ENCODE measurements at regions of chr20 and their contacts with region 1.

Region 1: GRCh38 chr20:36460648-36461599 is 80.4 kb upstream of the MYL9 start:
- DNase-seq: peak; percentile 95
- ATAC-seq: peak; percentile 78
- H3K4me3 Mint-ChIP-seq: peak overlapping the region; percentile 67
- H3K27ac Mint-ChIP-seq: peak overlapping the region; percentile 83
- H3K4me1 Mint-ChIP-seq: peaks cover 47% of the 10 kb centered on the region
- H3K27me3 Mint-ChIP-seq: no peaks in the 10 kb centered on the region

Region 2: DNA sequence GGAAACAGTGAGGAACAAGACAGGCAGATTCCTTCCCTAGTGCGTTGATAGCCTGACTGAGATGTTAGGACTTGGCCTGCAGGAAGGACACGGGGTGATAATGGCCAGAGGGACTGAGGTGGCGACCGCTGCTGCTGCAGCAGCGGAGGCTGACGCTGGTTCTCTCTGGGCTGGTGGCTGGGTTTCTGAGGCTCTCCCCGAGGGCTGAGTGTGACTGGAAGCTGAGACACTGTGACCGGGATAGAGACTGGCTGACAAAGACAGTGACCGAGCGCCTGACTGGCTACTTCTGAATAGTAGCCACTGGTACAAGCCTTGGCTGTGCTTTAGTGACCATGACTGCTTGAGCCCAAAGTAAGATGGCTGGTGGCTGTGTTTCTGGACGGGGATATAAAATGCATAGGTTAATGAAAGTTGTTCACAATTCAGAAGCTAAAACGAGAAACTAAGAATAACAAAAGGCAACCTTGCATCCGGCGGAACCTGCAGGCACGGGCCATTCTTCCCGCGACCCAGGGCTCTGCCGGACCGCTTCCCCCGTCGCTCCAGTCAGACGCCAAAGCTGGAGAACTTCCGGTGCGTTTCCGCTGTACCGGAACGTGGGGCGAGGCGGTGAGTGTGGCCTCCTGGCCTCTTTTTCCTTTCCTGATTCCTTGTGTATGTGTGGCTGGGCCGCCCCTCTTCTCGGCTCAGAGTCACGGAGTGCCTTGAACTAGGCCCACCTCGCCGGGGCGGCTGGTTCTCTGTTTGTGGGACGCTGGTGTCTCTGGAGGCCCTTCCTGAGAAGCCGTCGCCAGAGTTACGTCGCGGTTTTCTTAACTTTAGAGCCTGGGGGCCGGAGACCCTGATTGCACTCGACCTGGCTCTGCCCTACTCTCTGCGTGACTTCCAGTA is 224.8 kb before region 1 on chr20 and contains the start of gene AAR2:
- CTCF ChIA-PET with region 1: interaction called, 3 read pairs
- POLR2A ChIA-PET with region 1: no interaction called
- intact Hi-C with region 1: loop called in 1 of 2 experiments (anchors 1 kb)
- DNase-seq: peak; percentile 91
- ATAC-seq: peak; percentile 99
- H3K4me3 Mint-ChIP-seq: peak within 1 kb of the TSS; percentile 78
- H3K27ac Mint-ChIP-seq: peak within 1 kb of the TSS; percentile 81
- H3K4me1 Mint-ChIP-seq: peaks cover 32% of the 10 kb centered on the region
- H3K27me3 Mint-ChIP-seq: no peaks in the 10 kb centered on the region
- total RNA-seq, gene AAR2: 18.7 to 20.7 TPM

Region 3: DNA sequence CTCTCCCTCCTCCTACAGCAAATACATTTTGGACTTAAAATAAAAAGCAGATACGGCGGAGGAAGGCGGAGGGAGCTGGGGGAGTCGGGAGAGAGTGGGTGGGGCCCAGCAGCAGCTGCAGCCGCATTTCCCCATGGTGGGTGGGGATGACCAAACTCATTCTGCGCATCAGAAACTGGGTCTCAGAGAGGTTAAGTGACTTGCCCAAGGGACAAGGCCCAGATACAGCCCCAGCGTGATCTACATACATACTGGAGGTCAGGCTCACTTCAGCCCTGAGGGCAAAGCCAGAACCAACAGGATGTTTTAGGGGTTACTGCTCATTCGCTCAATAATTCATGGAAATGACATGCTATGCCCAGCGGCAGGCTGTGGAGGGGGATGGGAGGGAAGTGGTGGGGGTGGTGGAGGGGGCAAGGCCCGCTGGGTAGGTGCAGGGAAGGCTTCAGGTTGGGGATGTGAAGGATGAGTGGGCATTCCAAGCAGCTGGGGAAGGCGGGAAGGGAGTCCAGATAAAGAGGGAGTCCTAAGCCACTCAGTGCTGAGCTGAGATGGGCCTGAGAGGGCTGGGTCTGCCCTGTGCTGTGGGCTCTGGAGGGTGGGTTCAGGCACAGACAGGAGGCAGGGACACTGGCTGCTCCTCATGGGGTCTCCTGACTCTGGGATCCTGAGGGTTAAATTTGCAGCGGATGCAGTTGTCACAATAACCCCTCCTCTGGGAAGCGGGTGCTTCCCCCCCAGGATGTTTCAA is 123.8 kb before region 1 on chr20:
- CTCF ChIA-PET with region 1: no interaction called
- POLR2A ChIA-PET with region 1: no interaction called
- intact Hi-C with region 1: no loop called
- DNase-seq: no peak
- ATAC-seq: no peak
- H3K4me3 Mint-ChIP-seq: no peak overlapping the region
- H3K27ac Mint-ChIP-seq: no peak overlapping the region
- H3K4me1 Mint-ChIP-seq: peaks cover 5% of the 10 kb centered on the region
- H3K27me3 Mint-ChIP-seq: peaks cover 32% of the 10 kb centered on the region

Region 4: GRCh38 chr20:36519944-36520343 is 59.0 kb after region 1 on chr20:
- CTCF ChIA-PET with region 1: no interaction called
- POLR2A ChIA-PET with region 1: no interaction called
- intact Hi-C with region 1: loop called in 1 of 2 experiments (anchors 1 kb)
- DNase-seq: no peak
- ATAC-seq: peak; percentile 55
- H3K4me3 Mint-ChIP-seq: no peak overlapping the region
- H3K27ac Mint-ChIP-seq: peak overlapping the region; percentile 76
- H3K4me1 Mint-ChIP-seq: peaks cover 14% of the 10 kb centered on the region
- H3K27me3 Mint-ChIP-seq: no peaks in the 10 kb centered on the region

Region 5: GRCh38 chr20:36605399-36606157 is 144.7 kb after region 1 on chr20 and contains the start of gene RAB5IF:
- CTCF ChIA-PET with region 1: interaction called, 3 read pairs
- POLR2A ChIA-PET with region 1: interaction called, 7 read pairs
- intact Hi-C with region 1: loop called in 1 of 2 experiments (anchors 1 kb)
- DNase-seq: peak; percentile 100
- ATAC-seq: peak; percentile 91
- H3K4me3 Mint-ChIP-seq: peak within 1 kb of the TSS; percentile 100
- H3K27ac Mint-ChIP-seq: peak within 1 kb of the TSS; percentile 96
- H3K4me1 Mint-ChIP-seq: peaks cover 17% of the 10 kb centered on the region
- H3K27me3 Mint-ChIP-seq: no peaks in the 10 kb centered on the region
- total RNA-seq, gene RAB5IF: 71.7 to 90.2 TPM

Region 6: DNA sequence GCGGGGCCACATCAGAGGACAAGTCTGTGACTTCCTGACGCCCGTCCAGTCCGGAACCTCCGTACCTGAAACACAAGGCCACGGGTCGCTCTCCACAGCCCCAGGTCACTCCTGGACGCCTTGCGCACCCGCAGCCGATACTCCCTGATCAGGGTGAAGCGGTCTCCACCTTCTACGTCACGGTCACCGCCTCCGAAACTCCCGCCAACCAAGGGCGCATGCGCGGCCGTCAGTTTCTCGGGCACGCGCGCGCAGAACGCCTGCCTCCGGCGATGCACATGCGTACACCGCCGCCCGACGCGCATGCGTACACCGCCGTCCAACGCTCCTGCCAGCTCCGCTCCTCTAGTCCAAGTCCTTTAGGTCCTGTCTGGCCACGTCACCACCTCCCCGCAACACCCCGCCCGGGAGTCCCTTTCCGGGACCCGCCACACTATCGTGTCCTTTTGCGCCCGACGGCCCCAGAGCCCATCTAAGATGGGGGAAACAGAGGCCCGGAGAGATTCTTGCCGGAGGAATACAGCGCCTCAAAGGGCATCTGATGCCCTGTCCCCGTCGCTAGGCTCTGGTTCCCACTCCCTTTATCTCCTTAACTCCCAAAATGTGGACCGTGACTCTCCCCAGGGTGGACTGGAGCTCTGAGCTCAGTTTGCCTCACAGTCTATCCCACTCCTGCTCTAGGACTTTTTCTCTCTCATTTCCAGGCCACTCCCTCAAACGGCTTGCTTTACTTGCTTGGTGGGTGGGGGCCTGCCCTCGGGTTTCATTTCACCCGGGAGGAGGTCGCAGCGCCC is 312.9 kb after region 1 on chr20 and contains the start of gene DSN1:
- CTCF ChIA-PET with region 1: no interaction called
- POLR2A ChIA-PET with region 1: no interaction called
- intact Hi-C with region 1: loop called in 1 of 2 experiments (anchors 1 kb)
- DNase-seq: peak; percentile 99
- ATAC-seq: peak; percentile 91
- H3K4me3 Mint-ChIP-seq: peak within 1 kb of the TSS; percentile 79
- H3K27ac Mint-ChIP-seq: peak within 1 kb of the TSS; percentile 97
- H3K4me1 Mint-ChIP-seq: peaks cover 13% of the 10 kb centered on the region
- H3K27me3 Mint-ChIP-seq: no peaks in the 10 kb centered on the region
- total RNA-seq, gene DSN1: 20.4 to 20.7 TPM

Region 7: DNA sequence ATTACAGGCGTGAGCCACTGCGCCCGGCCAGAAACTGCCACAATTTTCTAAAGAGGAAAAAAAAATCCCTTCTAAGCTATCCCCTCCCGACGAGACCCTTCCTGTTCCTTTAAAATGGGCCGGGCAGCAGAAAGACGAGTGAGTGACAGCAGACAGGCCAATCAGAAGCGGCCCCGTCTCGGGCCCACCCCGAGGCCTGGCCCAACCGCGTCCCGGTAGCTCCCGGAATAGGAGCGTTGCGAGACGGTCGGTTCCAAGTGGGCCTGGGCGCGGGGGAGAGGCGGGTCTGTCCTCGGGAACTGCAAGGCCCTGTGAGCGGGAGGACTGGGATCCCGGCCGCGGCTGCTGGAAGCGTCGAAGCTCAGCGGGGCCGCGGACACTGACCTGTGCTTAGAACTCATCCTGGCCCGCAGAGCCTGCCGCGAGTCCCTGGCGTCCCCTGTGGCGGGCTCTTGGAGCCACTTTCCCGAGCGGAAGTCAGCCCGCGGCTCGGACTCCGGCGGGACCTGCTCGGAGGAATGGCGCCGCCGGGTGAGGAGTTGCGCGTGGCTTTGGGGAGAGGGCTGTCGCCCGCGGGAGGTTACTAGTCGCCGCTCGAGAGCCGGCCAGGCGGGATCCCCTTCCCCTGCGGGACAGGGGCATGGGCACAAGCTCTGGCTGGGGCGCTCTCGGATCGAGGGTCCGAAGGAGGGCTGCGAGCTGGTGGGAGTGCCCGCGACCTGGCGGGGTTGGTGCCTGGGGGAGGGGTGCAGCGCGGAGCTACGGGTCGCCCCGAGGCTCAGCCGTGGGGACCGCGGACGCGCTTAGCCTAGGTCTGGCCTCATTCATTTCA is 718.1 kb after region 1 on chr20 and contains the starts of genes MROH8 and RPN2:
- CTCF ChIA-PET with region 1: no interaction called
- POLR2A ChIA-PET with region 1: interaction called, 3 read pairs
- intact Hi-C with region 1: loop called in 1 of 2 experiments (anchors 2 kb)
- DNase-seq: peak; percentile 98
- ATAC-seq: peak; percentile 97
- H3K4me3 Mint-ChIP-seq: peak within 1 kb of the TSS; percentile 87
- H3K27ac Mint-ChIP-seq: peak within 1 kb of the TSS; percentile 92
- H3K4me1 Mint-ChIP-seq: peaks cover 33% of the 10 kb centered on the region
- H3K27me3 Mint-ChIP-seq: no peaks in the 10 kb centered on the region
- total RNA-seq, gene MROH8: 3.0 to 4.5 TPM
- total RNA-seq, gene RPN2: 103 to 115 TPM

Measured in activated CD4-positive, alpha-beta T cell treated with anti-CD3 and anti-CD28 coated beads for 36 hours (primary cell).